ENCODE measurements at regions of chr7 and their contacts with region 1.

Region 1: DNA sequence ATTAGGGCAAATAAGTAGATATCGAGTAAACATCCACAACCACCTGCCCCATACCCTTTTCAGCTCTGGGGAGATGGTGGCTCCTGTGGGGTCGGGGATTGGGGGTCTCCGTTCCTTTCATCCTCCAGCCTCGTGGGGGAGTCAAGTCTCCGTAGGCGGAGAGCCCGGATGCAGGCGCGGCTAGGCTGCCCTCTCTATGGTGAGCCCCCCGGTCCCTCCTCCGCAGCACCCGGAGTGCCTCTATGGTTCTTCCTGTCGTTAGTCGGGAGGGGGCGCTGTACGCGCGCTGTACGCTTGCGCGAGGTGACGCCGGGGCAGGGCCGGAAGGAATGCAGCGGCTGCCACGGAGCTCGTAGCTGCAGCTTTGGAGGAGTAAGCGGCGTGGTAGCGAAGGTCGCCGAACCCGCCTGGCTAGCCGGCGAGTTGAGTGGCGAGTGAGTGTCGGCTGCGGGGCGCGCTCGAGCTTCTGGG is 14.8 kb upstream of the MMD2 start:
- DNase-seq: peak; percentile 88 to 96 (median 91)
- ATAC-seq: peak; percentile 99
- H3K4me3 ChIP-seq: peak overlapping the region; percentile 70 to 94 (median 88)
- H3K27ac ChIP-seq: peak overlapping the region; percentile 35 to 94 (median 86)
- H3K4me1 ChIP-seq: peaks cover 0 to 27% (median 9%) of the 10 kb centered on the region in 12 donors
- H3K27me3 ChIP-seq: no peaks in the 10 kb centered on the region
- CTCF ChIP-seq: peak; percentile 71 to 91 (median 80)
- POLR2A ChIP-seq: peak in 1 of 2 donors; percentile 33

Region 2: GRCh38 chr7:5045558-5046396 is 72.0 kb after region 1 on chr7 and contains the start of gene RBAK:
- intact Hi-C with region 1: loop called in 1 of 10 experiments (anchors 5 kb)
- DNase-seq: peak; percentile 94 to 98 (median 97)
- ATAC-seq: peak; percentile 100
- H3K4me3 ChIP-seq: peak within 1 kb of the TSS; percentile 63 to 97 (median 83)
- H3K27ac ChIP-seq: peak within 1 kb of the TSS; percentile 70 to 93 (median 86)
- H3K4me1 ChIP-seq: peaks cover 0 to 10% (median 5%) of the 10 kb centered on the region in 12 donors
- H3K27me3 ChIP-seq: no peaks in the 10 kb centered on the region
- CTCF ChIP-seq: peak in 1 of 12 donors; percentile 17
- POLR2A ChIP-seq: peak in 1 of 2 donors; percentile 62
- total RNA-seq, gene RBAK: 4.6 to 10.6 (median 8.4) TPM

Measured in heart left ventricle (tissue), 16 donors.